Endothelial cell of umbilical vein (primary cell): ENCODE measurements at regions of chr2 and their contacts with region 1.

Region 1: DNA sequence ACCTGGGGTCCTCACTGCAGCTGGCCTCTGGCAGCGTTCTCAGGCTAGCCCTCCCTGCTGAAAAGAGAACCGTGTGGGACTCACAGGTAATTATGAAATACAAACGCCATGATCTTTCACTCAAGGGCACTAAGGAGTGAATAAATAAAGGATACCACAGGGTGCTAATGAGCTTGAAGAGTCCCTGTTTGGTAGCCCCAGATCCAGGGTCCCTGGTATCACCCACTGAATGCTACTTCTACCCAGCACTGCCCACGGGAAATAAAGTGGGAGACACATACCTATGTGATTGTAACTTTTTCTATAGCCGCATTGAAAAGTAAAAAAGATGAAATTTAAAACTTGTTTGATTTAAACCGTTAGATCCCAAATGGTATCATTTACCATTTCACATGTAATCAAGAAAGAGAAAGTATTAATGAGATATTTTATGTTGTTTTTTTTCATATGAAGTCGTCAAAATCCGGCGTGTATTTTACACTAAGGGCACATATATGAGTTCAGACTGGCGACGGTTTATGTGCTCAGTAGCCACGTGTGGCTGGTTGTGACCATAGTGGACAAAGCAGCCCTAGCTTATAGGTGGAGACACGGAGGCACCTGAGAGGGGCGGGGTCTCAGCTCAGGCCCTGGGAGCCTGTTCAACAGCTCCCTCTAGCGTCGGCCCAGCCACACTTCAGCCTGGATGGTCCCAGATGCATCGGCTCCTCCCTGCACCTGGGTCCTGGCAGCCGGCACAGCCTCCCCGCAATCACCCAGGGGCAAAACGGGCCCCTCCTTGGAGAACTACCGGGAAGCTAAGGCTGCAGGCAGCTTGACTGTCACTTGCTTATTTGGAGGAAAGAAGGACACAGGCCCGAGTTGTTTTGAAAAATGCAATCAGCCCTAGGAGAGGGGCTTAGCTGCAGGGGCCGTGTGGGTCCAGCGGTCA is 39.2 kb downstream of the ODC1 start:
- DNase-seq: peak; percentile 75
- H3K4me3 ChIP-seq: no peak overlapping the region
- H3K27ac ChIP-seq: peak overlapping the region; percentile 74
- H3K4me1 ChIP-seq: peaks cover 52% of the 10 kb centered on the region
- H3K27me3 ChIP-seq: no peaks in the 10 kb centered on the region
- CTCF ChIP-seq: peak; percentile 94 to 96
- POLR2A ChIP-seq: no peak

Region 2: DNA sequence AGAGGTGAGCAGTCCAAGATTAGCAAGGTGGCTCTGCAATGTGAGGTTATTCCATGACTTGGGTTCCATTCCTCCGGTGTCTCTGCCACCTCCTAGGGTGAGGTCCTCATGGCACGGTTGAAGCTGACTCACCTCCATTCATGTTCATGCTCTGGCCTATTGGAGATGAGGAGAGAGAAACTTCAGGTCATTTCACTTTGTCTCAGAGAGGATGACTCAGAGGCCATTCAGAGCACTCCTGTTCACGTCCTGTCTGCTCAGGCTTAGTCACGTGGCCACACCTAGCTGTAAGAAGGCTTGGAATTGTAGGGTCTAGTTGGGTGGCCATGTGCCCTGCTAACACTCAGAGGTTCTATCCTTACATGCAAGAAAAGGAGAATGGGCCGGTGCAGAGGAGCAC is 1337.9 kb before region 1 on chr2:
- CTCF ChIA-PET with region 1: no interaction called
- POLR2A ChIA-PET with region 1: no interaction called
- dilution Hi-C with region 1: no loop called
- intact Hi-C with region 1: no loop called
- DNase-seq: peak; percentile 23
- H3K4me3 ChIP-seq: no peak overlapping the region
- H3K27ac ChIP-seq: no peak overlapping the region
- H3K4me1 ChIP-seq: peaks cover 4% of the 10 kb centered on the region
- H3K27me3 ChIP-seq: peaks cover 0 to 2% of the 10 kb centered on the region in 2 experiments
- CTCF ChIP-seq: no peak
- POLR2A ChIP-seq: no peak

Region 3: DNA sequence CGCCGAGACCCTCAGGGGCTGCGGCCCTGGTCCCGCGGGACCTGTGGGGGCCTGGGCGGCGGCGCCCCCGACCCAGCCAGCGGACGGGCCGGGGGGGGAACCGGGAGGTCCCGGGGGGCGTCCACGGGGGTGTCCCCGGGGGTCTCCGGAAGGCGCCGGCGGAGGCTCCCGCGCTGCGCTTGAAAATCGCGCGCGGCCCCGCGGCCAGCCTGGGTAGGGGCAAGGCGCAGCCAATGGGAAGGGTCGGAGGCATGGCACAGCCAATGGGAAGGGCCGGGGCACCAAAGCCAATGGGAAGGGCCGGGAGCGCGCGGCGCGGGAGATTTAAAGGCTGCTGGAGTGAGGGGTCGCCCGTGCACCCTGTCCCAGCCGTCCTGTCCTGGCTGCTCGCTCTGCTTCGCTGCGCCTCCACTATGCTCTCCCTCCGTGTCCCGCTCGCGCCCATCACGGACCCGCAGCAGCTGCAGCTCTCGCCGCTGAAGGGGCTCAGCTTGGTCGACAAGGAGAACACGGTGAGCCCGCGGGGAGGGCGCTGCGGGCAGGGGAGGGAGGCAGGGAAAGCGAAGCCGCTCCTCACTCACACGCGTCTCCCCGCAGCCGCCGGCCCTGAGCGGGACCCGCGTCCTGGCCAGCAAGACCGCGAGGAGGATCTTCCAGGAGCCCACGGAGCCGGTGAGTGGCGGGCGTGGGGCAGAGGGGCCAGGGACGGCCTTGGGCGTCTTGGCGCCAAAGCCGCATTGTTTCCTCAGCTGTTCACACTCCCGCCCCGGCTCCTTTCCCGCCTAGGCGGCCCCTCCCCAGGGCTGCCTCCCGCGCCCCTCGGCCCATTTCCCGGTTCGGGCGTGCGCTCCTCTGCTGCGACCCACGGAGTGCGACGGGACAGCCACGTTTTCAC is 286.3 kb before region 1 on chr2 and contains the start of gene RRM2:
- CTCF ChIA-PET with region 1: interaction called, 212 read pairs
- POLR2A ChIA-PET with region 1: interaction called, 6 read pairs
- dilution Hi-C with region 1: no loop called
- intact Hi-C with region 1: loop called (anchors 1 kb)
- DNase-seq: peak; percentile 88
- H3K4me3 ChIP-seq: peak within 1 kb of the TSS; percentile 59 to 91 (median 70)
- H3K27ac ChIP-seq: peak within 1 kb of the TSS; percentile 60
- H3K4me1 ChIP-seq: peaks cover 53% of the 10 kb centered on the region
- H3K27me3 ChIP-seq: no peaks in the 10 kb centered on the region
- CTCF ChIP-seq: no peak
- POLR2A ChIP-seq: peak; percentile 93
- total RNA-seq, gene RRM2: 220 and 246 TPM in 2 replicates

Region 4: DNA sequence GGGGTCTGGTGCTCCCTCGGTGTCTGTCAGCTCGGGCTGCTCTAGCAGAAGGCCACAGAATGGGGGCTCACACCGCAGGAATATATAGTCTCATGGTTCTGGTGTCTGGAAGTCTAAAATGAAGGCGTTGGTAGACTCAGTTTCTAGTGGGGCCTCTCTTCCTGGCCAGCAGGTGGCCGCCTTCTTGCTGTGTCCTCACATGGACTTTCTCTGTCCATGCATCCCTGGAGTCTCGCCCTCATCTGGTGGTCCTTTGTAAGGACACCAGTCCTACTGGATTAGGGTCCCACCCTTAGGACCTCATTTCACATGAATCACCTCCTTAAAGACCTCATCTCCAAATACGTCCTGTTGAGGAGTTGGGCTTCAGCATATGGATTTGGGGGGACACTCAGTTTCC is 220.7 kb before region 1 on chr2:
- CTCF ChIA-PET with region 1: interaction called, 4 read pairs
- POLR2A ChIA-PET with region 1: no interaction called
- dilution Hi-C with region 1: no loop called
- intact Hi-C with region 1: loop called (anchors 1 kb)
- DNase-seq: peak; percentile 33
- H3K4me3 ChIP-seq: no peak overlapping the region
- H3K27ac ChIP-seq: no peak overlapping the region
- H3K4me1 ChIP-seq: no peaks in the 10 kb centered on the region
- H3K27me3 ChIP-seq: no peaks in the 10 kb centered on the region
- CTCF ChIP-seq: peak; percentile 52 to 66
- POLR2A ChIP-seq: no peak

Region 5: GRCh38 chr2:10302479-10303180 is 106.3 kb before region 1 on chr2 and contains the start of gene HPCAL1:
- CTCF ChIA-PET with region 1: interaction called, 142 read pairs
- POLR2A ChIA-PET with region 1: no interaction called
- dilution Hi-C with region 1: no loop called
- intact Hi-C with region 1: loop called (anchors 1 kb)
- DNase-seq: peak; percentile 81
- H3K4me3 ChIP-seq: peak within 1 kb of the TSS; percentile 67 to 78 (median 72)
- H3K27ac ChIP-seq: peak within 1 kb of the TSS; percentile 27
- H3K4me1 ChIP-seq: peaks cover 22% of the 10 kb centered on the region
- H3K27me3 ChIP-seq: no peaks in the 10 kb centered on the region
- CTCF ChIP-seq: peak; percentile 26 to 53
- POLR2A ChIP-seq: peak; percentile 89
- total RNA-seq, gene HPCAL1: 68.1 and 77.4 TPM in 2 replicates

Region 6: GRCh38 chr2:10366601-10367270 is 42.2 kb before region 1 on chr2:
- CTCF ChIA-PET with region 1: interaction called, 17 read pairs
- POLR2A ChIA-PET with region 1: no interaction called
- dilution Hi-C with region 1: no loop called
- intact Hi-C with region 1: no loop called
- DNase-seq: no peak
- H3K4me3 ChIP-seq: no peak overlapping the region
- H3K27ac ChIP-seq: no peak overlapping the region
- H3K4me1 ChIP-seq: no peaks in the 10 kb centered on the region
- H3K27me3 ChIP-seq: no peaks in the 10 kb centered on the region
- CTCF ChIP-seq: no peak
- POLR2A ChIP-seq: no peak

Region 7: GRCh38 chr2:10398496-10398895 is 10.4 kb before region 1 on chr2:
- CTCF ChIA-PET with region 1: interaction called, 17 read pairs
- POLR2A ChIA-PET with region 1: no interaction called
- dilution Hi-C with region 1: no loop called
- intact Hi-C with region 1: no loop called
- DNase-seq: no peak
- H3K4me3 ChIP-seq: no peak overlapping the region
- H3K27ac ChIP-seq: no peak overlapping the region
- H3K4me1 ChIP-seq: peaks cover 35% of the 10 kb centered on the region
- H3K27me3 ChIP-seq: no peaks in the 10 kb centered on the region
- CTCF ChIP-seq: no peak
- POLR2A ChIP-seq: no peak

Region 8: GRCh38 chr2:10548626-10549025 is 139.7 kb after region 1 on chr2:
- CTCF ChIA-PET with region 1: no interaction called
- POLR2A ChIA-PET with region 1: no interaction called
- dilution Hi-C with region 1: no loop called
- intact Hi-C with region 1: no loop called
- DNase-seq: peak; percentile 52
- H3K4me3 ChIP-seq: no peak overlapping the region
- H3K27ac ChIP-seq: no peak overlapping the region
- H3K4me1 ChIP-seq: peaks cover 10% of the 10 kb centered on the region
- H3K27me3 ChIP-seq: no peaks in the 10 kb centered on the region
- CTCF ChIP-seq: peak in 1 of 2 donors; percentile 9
- POLR2A ChIP-seq: no peak